ENCODE measurements at regions of chr10 and their contacts with region 1.

Region 1: DNA sequence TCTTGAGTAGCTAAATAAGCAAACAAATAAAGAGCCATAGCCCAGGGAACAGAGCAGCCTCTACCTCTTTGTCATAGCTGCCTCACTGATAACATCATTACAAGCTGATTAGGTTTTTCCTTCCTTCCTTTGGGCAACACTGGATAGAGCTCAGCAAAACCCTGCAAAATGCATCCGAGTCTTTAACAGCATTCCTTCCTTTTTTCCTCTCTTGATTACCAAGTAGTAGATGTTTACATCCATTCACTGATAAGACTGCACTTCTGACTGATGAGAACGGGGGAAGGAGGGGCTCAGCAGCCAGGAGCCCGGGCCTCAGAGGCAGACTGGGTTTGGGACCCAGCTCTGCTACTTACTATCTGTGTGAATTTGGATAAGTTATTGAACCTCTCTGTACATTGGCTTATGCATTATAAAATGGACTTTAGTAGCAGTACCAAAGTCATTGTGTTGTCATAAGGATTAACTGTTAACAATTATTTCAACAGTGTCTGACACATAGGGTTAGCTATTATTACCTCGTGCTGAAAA is 214.2 kb downstream of the ANK3 start:
- DNase-seq: peak; percentile 69 to 82
- H3K4me3 ChIP-seq: no peak overlapping the region
- H3K4me3 Mint-ChIP-seq: peak overlapping the region; percentile 2
- H3K27ac Mint-ChIP-seq: peak overlapping the region; percentile 54
- H3K4me1 ChIP-seq: peaks cover 65% of the 10 kb centered on the region
- H3K4me1 Mint-ChIP-seq: peaks cover 51% of the 10 kb centered on the region
- H3K27me3 ChIP-seq: no peaks in the 10 kb centered on the region
- H3K27me3 Mint-ChIP-seq: no peaks in the 10 kb centered on the region
- CTCF ChIP-seq: no peak

Region 2: DNA sequence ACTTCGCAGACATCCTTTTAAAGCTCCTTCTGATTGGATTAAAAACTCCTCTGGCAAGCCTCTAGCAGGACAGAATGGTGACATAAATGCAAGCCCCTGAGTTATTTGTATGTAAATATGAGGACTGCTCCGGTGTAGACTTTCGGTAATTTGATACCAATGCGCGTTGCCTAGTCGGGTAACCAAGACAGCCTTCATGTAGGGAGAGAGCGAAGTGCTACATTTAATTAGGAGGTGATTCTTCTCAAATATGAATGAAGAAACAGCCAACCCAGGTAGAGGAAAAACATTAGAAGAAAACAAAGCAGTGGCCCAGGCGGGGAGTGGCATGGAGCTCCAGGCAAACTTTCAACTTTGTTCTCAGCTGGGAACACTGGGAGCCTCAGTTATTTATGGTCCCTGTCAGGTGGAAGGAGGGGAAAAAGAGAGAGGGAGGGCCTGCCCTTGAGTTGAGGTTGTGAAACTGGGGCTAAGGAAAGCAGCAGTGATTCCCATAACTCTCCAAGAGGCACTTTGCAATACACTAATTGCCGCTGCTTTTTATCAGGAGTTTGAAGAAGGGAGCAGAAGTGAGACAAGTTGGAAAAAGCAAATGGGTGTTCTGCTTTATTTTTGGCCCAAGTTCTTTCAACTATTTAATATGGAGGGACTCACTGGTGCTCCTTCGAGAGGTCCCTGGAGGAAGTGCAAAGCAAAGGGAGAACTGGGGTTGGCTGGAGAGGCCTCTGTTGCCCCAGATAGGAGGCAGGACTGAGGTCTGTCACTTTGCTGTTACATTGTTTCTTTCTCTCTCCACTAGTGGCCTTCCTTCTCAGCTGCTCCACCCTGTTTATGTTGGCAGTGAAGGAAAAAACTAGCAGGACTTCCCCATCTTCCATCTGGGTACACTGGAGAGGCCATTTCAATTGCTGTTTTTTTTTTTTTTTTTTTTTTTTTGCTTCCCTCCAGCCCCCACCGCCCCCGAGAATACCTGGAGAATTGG is 34.6 kb before region 1 on chr10:
- CTCF ChIA-PET with region 1: interaction called, 5 read pairs
- POLR2A ChIA-PET with region 1: interaction called, 4 read pairs
- intact Hi-C with region 1: loop called (anchors 1 kb)
- DNase-seq: peak; percentile 81 to 83
- H3K4me3 ChIP-seq: peak overlapping the region; percentile 38
- H3K4me3 Mint-ChIP-seq: no peak overlapping the region
- H3K27ac Mint-ChIP-seq: no peak overlapping the region
- H3K4me1 ChIP-seq: peaks cover 61% of the 10 kb centered on the region
- H3K4me1 Mint-ChIP-seq: peaks cover 13% of the 10 kb centered on the region
- H3K27me3 ChIP-seq: no peaks in the 10 kb centered on the region
- H3K27me3 Mint-ChIP-seq: no peaks in the 10 kb centered on the region
- CTCF ChIP-seq: peak in 1 of 2 experiments; percentile 0

Region 3: DNA sequence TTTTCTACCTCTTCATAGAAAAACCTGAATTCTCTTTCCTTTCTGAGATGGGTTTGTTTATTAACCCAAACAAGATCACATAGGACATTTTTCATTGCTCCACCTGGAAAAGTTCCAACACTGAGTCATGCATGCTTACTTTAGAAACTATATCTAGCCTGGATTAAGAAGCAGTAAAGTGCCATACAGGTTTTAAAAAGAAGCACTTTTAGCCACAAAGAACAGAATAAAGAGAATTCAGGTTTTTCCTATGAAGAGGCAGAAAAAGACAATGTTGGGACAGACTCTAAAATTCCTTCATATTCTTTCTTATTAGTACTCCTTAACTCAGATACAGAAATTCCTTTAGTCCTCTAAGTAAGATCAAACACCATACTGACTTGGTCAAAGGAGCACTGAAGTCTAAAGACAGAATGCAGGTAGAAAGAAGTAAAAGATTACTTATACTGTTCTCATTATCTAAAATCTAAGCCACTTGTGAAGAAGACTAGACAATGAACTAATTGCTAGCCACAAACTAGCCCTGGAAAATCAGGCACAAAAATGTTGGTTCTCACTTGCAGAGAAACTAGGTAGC is 27.2 kb before region 1 on chr10:
- CTCF ChIA-PET with region 1: no interaction called
- POLR2A ChIA-PET with region 1: no interaction called
- intact Hi-C with region 1: loop called (anchors 1 kb)
- DNase-seq: peak in 1 of 2 experiments; percentile 21
- H3K4me3 ChIP-seq: no peak overlapping the region
- H3K4me3 Mint-ChIP-seq: no peak overlapping the region
- H3K27ac Mint-ChIP-seq: peak overlapping the region; percentile 13
- H3K4me1 ChIP-seq: peaks cover 23% of the 10 kb centered on the region
- H3K4me1 Mint-ChIP-seq: peaks cover 28% of the 10 kb centered on the region
- H3K27me3 ChIP-seq: no peaks in the 10 kb centered on the region
- H3K27me3 Mint-ChIP-seq: no peaks in the 10 kb centered on the region
- CTCF ChIP-seq: no peak